ENCODE measurements at regions of chr20 and their contacts with region 1.

Region 1: DNA sequence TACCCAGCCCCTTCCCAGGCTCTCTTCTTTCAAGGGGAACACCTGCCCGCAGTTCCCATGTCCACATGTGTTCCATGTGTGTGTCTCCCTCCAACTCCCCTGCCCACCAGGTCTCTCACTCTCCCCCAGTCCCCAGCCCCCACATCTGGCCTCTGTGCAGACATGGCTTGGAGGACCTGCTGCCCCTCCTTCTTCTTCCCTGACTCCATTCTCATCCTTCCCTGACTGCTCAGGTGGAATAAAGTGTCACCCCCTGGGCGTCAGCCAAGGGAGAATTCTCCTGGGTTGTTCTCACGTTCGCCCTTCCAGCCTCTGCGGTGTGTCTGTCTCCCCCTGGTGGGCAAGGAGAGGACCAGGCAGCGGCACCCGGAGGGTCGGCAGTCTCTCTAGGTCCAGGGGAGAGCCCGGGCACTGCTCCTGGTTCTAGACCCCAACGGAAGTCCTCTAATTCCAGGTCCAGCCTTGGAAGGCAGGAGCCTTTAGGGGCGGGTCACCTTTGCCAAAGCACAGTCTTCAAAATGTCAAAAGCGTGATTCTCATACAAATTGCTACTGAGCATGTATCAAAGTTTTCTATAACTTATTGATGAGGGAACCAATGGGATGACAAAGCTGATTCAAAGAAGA is 50.5 kb downstream of the EBF4 start:
- DNase-seq: peak; percentile 58 to 88 (median 72)
- ATAC-seq: peak; percentile 43 to 72
- H3K4me3 Mint-ChIP-seq: peak overlapping the region; percentile 46 to 96 (median 77)
- H3K27ac Mint-ChIP-seq: peak overlapping the region; percentile 87 to 99 (median 96)
- H3K4me1 Mint-ChIP-seq: peaks cover 38 to 63% (median 50%) of the 10 kb centered on the region in 4 donors
- H3K27me3 Mint-ChIP-seq: peaks cover 0 to 1% (median 0%) of the 10 kb centered on the region in 5 donors

Region 2: DNA sequence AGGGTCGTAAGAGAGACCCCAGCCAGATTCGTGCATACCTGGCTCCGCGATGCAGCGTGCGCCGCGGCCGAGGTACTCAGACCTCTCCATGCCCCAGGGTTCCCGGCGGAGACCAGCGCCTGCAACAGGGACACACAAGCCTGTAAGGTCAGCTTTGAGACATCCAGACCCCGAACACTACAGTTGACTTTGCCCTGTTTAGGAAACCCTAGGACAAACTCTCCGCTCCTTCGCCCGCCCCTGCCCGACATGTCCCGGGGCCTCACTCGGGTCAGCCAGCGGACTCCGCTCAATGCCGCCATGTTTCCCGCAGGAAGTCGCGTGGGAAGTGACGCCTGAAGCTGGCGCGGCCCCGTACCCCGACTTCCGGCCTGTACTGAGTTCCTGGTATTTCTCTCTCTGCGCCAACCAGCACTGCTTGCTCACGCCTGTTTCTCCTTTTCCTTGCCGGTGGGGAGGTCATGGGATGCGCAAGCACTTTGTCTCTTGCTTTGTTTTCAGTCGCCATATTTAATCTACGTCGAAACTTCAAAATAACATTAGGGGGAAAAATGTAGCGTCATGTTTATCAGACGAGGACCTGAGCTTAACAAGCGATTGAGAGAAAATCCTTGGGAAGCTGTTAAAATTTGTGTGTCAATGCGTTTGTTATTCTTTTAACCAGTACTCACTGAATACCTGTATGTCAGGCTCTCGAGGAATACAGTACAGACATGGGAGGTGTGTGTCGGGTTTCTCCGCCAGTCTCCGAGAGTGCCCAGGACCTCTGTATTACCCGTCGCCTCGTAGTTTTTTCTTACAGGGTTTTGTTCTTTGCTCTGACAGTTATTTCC is 78.9 kb before region 1 on chr20 and contains the start of gene IDH3B:
- POLR2A ChIA-PET with region 1: interaction called, 10 read pairs
- DNase-seq: peak; percentile 80 to 94 (median 91)
- ATAC-seq: peak; percentile 98 to 99
- H3K4me3 Mint-ChIP-seq: peak within 1 kb of the TSS; percentile 89 to 99 (median 92)
- H3K27ac Mint-ChIP-seq: peak within 1 kb of the TSS; percentile 92 to 100 (median 96)
- H3K4me1 Mint-ChIP-seq: peaks cover 12 to 37% (median 26%) of the 10 kb centered on the region in 4 donors
- H3K27me3 Mint-ChIP-seq: peaks cover 0 to 7% (median 0%) of the 10 kb centered on the region in 5 donors
- polyA plus RNA-seq, gene IDH3B: 95.6 to 126 (median 115) TPM

Region 3: DNA sequence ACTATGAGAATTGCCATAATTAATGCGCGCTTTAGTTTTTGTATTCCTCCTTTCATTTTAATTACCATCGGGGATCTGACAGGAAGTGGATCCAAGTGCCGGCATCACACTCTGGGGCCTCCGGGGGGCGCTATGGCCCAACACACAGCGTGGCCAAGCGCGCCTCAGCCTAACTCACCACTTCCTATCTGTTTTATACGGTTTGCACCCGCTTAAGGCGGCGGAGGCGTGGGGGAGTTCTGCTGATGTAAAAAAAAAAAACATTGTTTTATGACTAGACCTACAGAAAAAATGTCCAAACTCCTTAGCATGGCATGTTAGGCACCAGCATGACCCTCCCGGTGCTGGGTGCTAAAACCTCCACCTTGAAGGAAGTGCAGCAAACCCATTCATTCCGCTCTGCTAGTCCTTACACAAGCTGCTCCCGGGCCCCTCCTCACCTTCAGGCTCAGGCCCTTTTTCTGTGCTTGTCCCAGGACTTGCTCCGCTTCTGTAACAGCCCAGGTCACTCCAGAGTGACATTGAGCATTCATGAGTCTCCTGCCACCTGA is 54.9 kb before region 1 on chr20:
- POLR2A ChIA-PET with region 1: interaction called, 21 read pairs
- DNase-seq: peak; percentile 70 to 89 (median 78)
- ATAC-seq: peak; percentile 78 to 91
- H3K4me3 Mint-ChIP-seq: peak overlapping the region in 9 of 10 donors; percentile 43 to 71 (median 56)
- H3K27ac Mint-ChIP-seq: peak overlapping the region; percentile 9 to 82 (median 54)
- H3K4me1 Mint-ChIP-seq: peaks cover 21 to 33% (median 28%) of the 10 kb centered on the region in 4 donors
- H3K27me3 Mint-ChIP-seq: peaks cover 2 to 25% (median 5%) of the 10 kb centered on the region in 5 donors

Region 4: DNA sequence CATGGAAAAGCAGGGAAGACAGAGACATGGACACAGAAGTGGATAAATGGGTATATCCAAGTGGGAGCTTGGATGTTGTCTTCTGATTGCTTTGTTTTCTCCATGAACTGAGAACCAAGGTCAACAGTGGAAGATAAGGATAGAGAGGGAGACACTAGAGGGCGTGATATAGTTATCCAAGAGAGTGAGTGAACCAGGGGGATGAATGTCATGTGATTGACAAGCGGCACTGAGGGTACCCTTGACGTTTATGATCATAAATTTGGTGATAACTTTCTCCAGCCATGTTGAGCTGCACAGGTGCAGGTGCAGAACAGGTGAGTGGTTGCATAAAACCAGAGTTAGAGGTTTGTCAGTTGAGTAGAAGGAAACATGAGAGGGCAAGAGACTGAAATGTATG is 29.8 kb before region 1 on chr20:
- POLR2A ChIA-PET with region 1: interaction called, 28 read pairs
- DNase-seq: peak in 4 of 10 donors; percentile 31 to 67 (median 56)
- ATAC-seq: peak; percentile 78 to 93
- H3K4me3 Mint-ChIP-seq: no peak overlapping the region
- H3K27ac Mint-ChIP-seq: no peak overlapping the region
- H3K4me1 Mint-ChIP-seq: peaks cover 0 to 3% (median 2%) of the 10 kb centered on the region in 4 donors
- H3K27me3 Mint-ChIP-seq: peaks cover 0 to 4% (median 0%) of the 10 kb centered on the region in 5 donors

Region 5: DNA sequence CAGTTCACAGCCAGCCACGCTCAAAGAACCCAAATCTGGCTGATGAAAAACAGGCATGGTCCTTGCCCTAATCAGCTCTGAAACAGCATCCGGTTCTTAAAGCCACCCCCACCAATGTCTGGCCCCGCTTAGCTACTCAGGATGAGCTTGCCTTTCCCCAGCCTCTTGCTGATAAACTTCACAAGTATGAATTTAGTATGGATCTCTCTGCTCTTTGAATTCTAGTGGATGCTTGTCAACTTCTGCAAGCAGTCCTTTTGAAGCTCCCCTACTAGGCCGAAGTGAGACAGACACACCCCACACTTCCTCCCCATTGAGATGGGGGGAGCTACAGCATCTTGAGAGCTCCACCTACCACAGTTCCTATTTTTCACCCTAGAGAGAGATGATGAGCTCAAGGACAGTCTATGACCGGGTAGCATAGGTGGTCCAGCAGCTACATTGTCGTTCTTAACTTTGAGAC is 13.8 kb before region 1 on chr20:
- POLR2A ChIA-PET with region 1: interaction called, 150 read pairs
- DNase-seq: peak in 8 of 10 donors; percentile 27 to 71 (median 45)
- ATAC-seq: peak; percentile 97 to 98
- H3K4me3 Mint-ChIP-seq: peak overlapping the region; percentile 58 to 83 (median 73)
- H3K27ac Mint-ChIP-seq: peak overlapping the region; percentile 20 to 97 (median 94)
- H3K4me1 Mint-ChIP-seq: peaks cover 9 to 34% (median 28%) of the 10 kb centered on the region in 4 donors
- H3K27me3 Mint-ChIP-seq: peaks cover 0 to 7% (median 0%) of the 10 kb centered on the region in 5 donors

Region 6: DNA sequence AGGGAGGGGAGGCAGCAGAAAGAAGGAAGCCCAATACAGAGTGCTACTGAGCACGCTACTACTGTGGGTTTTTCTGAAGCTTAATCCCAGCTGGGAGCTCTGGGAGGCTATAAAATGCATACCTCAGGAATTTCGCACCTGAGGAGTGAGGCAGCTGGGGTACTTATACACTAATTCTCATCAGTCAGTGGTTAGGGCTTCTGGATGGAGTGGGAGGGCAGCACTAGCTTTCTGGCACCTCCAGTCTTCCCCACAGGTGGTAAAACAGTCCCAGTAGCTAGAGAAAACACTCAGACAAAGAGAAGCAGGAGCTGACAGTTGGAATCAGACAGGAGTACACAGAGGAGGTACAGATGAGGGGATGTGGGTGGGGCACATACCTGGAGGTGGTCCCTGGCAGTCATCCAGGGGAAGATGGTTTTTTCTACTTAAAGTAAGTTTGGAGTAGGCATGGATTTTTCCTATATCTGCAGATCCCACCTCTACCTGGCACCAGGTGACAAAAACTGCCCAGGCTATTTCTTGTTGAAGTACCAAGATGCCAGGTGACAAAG is 19.6 kb after region 1 on chr20:
- POLR2A ChIA-PET with region 1: no interaction called
- DNase-seq: no peak
- ATAC-seq: no peak
- H3K4me3 Mint-ChIP-seq: no peak overlapping the region
- H3K27ac Mint-ChIP-seq: no peak overlapping the region
- H3K4me1 Mint-ChIP-seq: no peaks in the 10 kb centered on the region
- H3K27me3 Mint-ChIP-seq: peaks cover 6 to 34% (median 19%) of the 10 kb centered on the region in 5 donors

Region 7: GRCh38 chr20:2955257-2955970 is 212.4 kb after region 1 on chr20:
- POLR2A ChIA-PET with region 1: no interaction called
- DNase-seq: no peak
- ATAC-seq: no peak
- H3K4me3 Mint-ChIP-seq: no peak overlapping the region
- H3K27ac Mint-ChIP-seq: peak overlapping the region in 3 of 10 donors; percentile 3 to 81 (median 74)
- H3K4me1 Mint-ChIP-seq: peaks cover 6 to 26% (median 18%) of the 10 kb centered on the region in 4 donors
- H3K27me3 Mint-ChIP-seq: no peaks in the 10 kb centered on the region